BJ (cell line): ENCODE measurements at regions of chr1 and their contacts with region 1.

Region 1: DNA sequence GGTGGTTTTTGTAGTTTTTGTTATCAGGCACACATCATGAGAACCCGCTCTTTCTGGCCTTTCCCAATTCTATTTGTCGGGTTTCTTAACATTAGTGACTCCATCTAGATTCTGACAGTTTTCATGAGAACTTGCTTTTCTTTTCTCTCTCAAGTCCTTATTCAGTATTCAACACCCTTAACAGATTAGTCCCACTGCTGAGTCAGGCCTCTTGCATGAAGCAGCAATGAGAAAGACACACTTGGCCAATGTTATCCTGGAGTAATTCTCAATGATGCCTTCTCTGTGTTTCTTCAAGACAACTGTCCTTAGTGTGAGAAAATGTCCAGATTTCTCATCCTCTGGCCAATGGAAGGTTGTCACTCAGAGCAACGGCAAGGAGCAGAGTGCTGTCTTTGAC is 11.3 kb downstream of the FMO2 start:
- DNase-seq: no peak
- H3K4me3 ChIP-seq: no peak overlapping the region
- H3K27me3 ChIP-seq: no peaks in the 10 kb centered on the region
- CTCF ChIP-seq: no peak

Region 2: GRCh38 chr1:171210355-171210754 is 14.0 kb after region 1 on chr1:
- CTCF ChIA-PET with region 1: interaction called, 10 read pairs
- POLR2A ChIA-PET with region 1: no interaction called
- DNase-seq: no peak
- H3K4me3 ChIP-seq: no peak overlapping the region
- H3K27me3 ChIP-seq: no peaks in the 10 kb centered on the region
- CTCF ChIP-seq: no peak